ENCODE measurements at regions of chr17 and their contacts with region 1.

Region 1: GRCh38 chr17:75749545-75750389 is 15.2 kb downstream of the GALK1 start:
- DNase-seq: peak; percentile 89 to 91
- ATAC-seq: peak; percentile 72 to 85 (median 72)
- H3K4me3 ChIP-seq: no peak overlapping the region
- H3K4me3 Mint-ChIP-seq: peak overlapping the region; percentile 45
- H3K27ac ChIP-seq: no peak overlapping the region
- H3K27ac Mint-ChIP-seq: no peak overlapping the region
- H3K4me1 ChIP-seq: peaks cover 31% of the 10 kb centered on the region
- H3K4me1 Mint-ChIP-seq: peaks cover 13 to 16% of the 10 kb centered on the region in 2 donors
- H3K27me3 ChIP-seq: no peaks in the 10 kb centered on the region
- H3K27me3 Mint-ChIP-seq: peaks cover 3 to 7% of the 10 kb centered on the region in 2 donors
- CTCF ChIP-seq: peak; percentile 89

Region 2: DNA sequence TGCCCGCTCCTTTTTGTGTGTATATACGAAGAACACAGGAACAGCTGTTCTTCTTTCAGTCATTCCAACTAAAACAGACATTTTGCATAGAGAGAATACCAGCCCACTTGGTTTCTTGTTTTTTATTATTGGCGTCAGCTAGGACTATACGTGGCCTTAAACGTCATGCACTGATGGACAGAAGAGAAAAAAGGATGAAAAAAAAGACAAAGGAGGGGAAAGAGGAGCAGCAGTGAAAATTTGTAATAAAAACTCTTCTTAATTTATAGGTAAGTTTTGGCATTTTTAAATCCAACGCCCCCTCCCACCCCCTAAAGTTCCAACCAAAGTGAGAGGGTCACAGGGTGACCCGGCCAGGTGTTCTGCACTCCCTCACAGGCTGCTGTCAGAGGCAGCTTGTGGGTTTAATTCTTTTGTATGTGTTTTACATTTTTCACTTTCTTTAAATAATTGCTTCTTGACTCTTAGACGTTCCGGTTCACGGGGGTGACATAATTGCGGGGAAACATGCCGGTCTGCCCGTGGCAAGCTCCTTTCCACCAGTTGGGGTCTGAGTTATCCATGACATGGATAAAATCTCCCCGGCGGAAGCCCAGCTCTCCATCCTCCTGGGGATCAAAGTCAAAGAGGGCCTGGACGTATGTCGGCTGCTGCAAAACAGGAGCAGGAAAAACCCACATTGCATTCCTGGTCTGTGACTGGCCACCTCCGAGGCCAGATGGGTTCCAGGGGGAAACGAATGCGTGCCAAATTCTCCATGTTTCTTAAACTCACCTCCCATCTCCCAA is 429.7 kb before region 1 on chr17:
- intact Hi-C with region 1: no loop called
- DNase-seq: no peak
- ATAC-seq: no peak
- H3K4me3 ChIP-seq: no peak overlapping the region
- H3K4me3 Mint-ChIP-seq: no peak overlapping the region
- H3K27ac ChIP-seq: peak overlapping the region; percentile 51
- H3K27ac Mint-ChIP-seq: no peak overlapping the region
- H3K4me1 ChIP-seq: peaks cover 36% of the 10 kb centered on the region
- H3K4me1 Mint-ChIP-seq: peaks cover 7 to 12% of the 10 kb centered on the region in 2 donors
- H3K27me3 ChIP-seq: no peaks in the 10 kb centered on the region
- H3K27me3 Mint-ChIP-seq: no peaks in the 10 kb centered on the region
- CTCF ChIP-seq: no peak

Region 3: DNA sequence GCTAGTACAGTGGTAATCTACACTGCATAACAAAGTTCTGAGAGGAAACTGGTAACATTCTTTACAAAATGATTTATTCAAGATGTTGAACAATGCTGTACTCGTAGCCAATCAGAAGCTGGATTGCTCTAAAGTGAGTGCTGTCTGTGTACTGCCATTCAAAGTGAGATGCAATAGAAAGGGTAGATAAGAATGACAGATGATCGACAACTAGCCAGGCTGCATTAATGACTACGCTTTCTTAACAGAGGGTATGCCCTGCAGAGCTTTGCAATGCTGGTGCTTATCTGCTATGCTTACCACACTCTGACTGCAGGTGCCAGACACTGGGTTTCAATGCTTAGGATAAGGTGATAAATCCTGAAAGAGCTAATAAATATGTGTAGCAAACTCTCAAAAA is 414.5 kb before region 1 on chr17:
- intact Hi-C with region 1: no loop called
- DNase-seq: no peak
- ATAC-seq: peak in 1 of 3 donors; percentile 32
- H3K4me3 ChIP-seq: no peak overlapping the region
- H3K4me3 Mint-ChIP-seq: no peak overlapping the region
- H3K27ac ChIP-seq: no peak overlapping the region
- H3K27ac Mint-ChIP-seq: peak overlapping the region; percentile 20 to 24
- H3K4me1 ChIP-seq: peaks cover 45% of the 10 kb centered on the region
- H3K4me1 Mint-ChIP-seq: peaks cover 41 to 52% of the 10 kb centered on the region in 2 donors
- H3K27me3 ChIP-seq: no peaks in the 10 kb centered on the region
- H3K27me3 Mint-ChIP-seq: no peaks in the 10 kb centered on the region
- CTCF ChIP-seq: no peak

Region 4: DNA sequence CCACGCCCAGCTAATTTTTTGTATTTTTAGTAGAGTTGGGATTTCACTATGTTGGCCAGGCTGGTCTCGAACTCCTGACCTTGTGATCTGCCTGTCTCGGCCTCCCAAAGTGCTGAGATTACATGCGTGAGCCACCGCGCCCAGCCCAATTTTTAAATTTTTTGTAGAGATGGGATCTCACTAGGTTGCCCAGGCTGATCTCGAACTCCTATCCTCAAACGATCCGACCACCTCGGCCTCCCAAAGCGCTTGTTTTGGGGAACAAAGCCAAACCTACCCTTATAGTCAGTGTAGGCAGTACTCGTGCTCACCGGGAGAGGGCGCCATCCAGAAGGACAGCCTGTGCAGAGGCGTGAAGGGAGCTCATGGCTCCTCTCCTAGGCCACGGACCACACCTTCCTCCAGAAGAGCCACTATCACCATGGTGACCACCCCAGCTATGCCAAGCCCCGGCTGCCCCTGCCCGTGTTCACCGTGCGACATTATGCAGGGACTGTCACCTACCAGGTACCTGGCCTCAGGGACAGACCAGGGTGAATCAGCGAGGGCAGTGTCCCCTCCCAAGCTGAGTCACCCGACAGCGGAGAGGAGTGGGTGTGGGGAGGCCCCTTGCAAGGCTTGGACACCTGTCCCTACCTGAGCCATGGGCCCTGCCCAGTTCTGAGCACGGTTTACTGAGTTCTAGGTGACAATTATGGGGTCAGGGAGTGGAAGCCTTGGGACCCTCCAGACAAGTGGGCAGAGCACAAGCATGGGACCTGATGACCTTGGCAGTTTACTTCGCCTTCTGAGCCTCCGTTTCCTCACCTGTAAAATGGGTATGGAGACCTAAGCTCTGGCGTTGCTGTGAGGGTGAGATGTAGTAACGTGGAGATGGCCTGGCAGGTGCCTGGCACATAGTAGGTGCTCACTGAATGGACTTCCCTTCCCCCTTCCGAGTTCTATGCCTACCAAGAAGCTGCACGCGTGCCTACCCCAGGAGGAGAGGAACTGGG is 148.4 kb before region 1 on chr17:
- intact Hi-C with region 1: loop called (anchors 1 kb)
- DNase-seq: peak; percentile 55 to 72
- ATAC-seq: peak; percentile 84 to 90 (median 89)
- H3K4me3 ChIP-seq: no peak overlapping the region
- H3K4me3 Mint-ChIP-seq: no peak overlapping the region
- H3K27ac ChIP-seq: no peak overlapping the region
- H3K27ac Mint-ChIP-seq: no peak overlapping the region
- H3K4me1 ChIP-seq: no peaks in the 10 kb centered on the region
- H3K4me1 Mint-ChIP-seq: peaks cover 0 to 5% of the 10 kb centered on the region in 2 donors
- H3K27me3 ChIP-seq: no peaks in the 10 kb centered on the region
- H3K27me3 Mint-ChIP-seq: no peaks in the 10 kb centered on the region
- CTCF ChIP-seq: peak; percentile 71

Region 5: DNA sequence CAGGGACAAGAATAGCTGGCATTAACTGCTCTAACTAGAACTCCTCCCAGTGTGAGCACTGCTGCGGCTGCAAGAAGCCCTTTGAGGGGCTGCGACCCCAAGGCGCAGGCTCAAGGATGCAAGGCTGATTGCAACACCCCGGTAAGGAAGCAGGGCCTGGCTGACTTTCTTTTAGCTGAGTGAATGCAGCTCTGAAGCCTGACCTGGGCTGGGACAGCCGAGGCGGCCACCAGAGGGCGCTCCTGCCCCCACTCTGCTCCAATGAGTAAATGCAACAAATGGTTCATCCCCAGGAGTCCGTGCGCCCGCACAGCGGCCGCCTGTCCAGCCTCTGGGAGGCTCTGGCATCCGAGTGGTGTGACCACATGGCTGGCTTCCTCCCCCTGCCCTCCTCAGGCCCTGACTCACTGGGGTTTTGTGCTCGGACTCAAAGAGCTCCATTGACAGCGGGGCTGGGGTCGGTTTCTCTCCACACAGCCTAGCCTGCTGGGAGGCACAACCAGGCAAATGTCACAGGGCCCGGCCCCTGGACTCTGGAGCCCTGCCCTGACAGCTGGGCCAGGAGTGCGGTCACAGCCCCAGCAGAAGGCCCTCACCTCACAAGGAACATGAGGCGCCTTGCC is 116.8 kb before region 1 on chr17 and contains the start of gene SMIM5:
- intact Hi-C with region 1: loop called (anchors 1 kb)
- DNase-seq: peak; percentile 81 to 88
- ATAC-seq: peak; percentile 88 to 97 (median 90)
- H3K4me3 ChIP-seq: no peak within 1 kb of the TSS
- H3K4me3 Mint-ChIP-seq: no peak within 1 kb of the TSS
- H3K27ac ChIP-seq: no peak within 1 kb of the TSS
- H3K27ac Mint-ChIP-seq: peak within 1 kb of the TSS in 1 of 2 donors; percentile 31
- H3K4me1 ChIP-seq: peaks cover 17% of the 10 kb centered on the region
- H3K4me1 Mint-ChIP-seq: peaks cover 0 to 5% of the 10 kb centered on the region in 2 donors
- H3K27me3 ChIP-seq: no peaks in the 10 kb centered on the region
- H3K27me3 Mint-ChIP-seq: no peaks in the 10 kb centered on the region
- CTCF ChIP-seq: peak; percentile 82
- total RNA-seq, gene SMIM5: 0.95 to 2.0 (median 1.5) TPM

Region 6: DNA sequence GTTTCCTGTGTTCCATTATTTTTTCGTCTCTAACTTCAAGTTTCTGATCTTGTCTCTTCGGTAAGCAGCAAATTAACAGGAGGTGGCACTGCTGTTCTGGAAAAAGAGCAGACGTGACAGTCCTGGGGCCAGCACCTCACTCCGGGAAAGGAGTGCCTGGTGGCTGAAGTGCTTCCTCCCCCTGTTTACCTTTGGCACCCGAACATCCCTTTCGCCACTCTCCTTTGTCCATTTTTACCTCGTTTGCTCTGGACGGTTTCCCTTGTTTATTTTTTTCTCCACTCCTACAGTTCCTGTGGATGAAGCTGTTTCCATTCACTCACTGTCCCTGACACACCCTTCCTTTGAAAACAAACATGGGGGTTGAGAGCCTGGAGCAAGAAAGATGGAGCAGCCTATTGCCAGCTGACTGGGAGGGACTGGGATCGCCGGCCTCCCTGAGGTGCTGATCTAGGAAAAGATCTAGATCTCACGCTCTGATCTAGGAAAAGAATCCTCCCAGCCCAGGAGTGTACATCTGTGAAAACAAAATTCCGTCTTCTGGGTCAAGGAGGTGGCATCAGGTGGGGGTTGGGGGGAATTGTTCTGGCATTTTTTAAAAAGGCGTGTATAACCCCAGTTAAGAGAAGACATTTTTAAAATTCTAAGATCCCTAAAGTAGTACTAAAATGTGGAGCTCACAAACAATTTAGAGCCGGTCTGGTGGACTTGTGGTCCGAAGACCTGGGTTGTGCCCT is 69.9 kb before region 1 on chr17:
- intact Hi-C with region 1: loop called (anchors 2 kb)
- DNase-seq: no peak
- ATAC-seq: no peak
- H3K4me3 ChIP-seq: no peak overlapping the region
- H3K4me3 Mint-ChIP-seq: no peak overlapping the region
- H3K27ac ChIP-seq: no peak overlapping the region
- H3K27ac Mint-ChIP-seq: no peak overlapping the region
- H3K4me1 ChIP-seq: no peaks in the 10 kb centered on the region
- H3K4me1 Mint-ChIP-seq: peaks cover 0 to 16% of the 10 kb centered on the region in 2 donors
- H3K27me3 ChIP-seq: no peaks in the 10 kb centered on the region
- H3K27me3 Mint-ChIP-seq: no peaks in the 10 kb centered on the region
- CTCF ChIP-seq: no peak

Region 7: DNA sequence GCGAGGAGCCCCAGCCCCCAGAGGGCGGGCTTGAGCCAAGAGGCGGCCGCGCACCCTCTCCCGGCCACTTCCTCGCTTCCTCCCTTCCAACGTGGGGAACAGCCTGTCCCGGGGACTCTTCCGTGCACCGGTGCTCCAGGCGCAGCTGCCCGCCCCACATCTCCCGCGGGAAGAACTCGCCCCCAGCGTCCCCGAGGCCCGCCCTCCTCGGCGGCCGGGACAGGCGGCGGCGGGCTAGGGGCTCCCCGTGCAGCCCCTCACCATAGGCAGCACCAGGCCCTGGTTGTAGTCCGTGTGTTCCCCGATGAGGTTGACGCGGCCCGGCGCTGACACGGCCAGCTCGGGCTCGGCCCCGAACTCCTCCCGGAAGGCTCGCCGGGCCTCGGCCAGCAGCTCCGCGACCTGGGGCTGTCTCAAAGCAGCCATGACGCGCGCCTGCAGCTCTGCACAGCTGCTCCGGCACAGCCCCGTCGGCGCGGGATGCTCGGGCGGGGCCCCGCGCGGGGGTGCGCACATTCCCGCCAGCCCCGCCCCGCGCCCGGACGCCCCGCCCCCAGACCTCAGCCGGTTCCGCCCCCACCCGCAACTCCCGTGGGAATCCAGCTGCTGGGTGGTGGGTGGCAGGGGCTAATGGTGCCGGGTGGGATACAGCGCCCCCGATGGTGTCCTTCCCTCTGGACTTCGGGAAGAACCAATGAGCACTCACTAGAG is 15.1 kb after region 1 on chr17 and contains the start of gene GALK1:
- intact Hi-C with region 1: no loop called
- DNase-seq: peak; percentile 56 to 87
- ATAC-seq: peak; percentile 83 to 93 (median 93)
- H3K4me3 ChIP-seq: peak within 1 kb of the TSS; percentile 58
- H3K4me3 Mint-ChIP-seq: peak within 1 kb of the TSS; percentile 82
- H3K27ac ChIP-seq: peak within 1 kb of the TSS; percentile 41
- H3K27ac Mint-ChIP-seq: peak within 1 kb of the TSS in 1 of 2 donors; percentile 66
- H3K4me1 ChIP-seq: peaks cover 22% of the 10 kb centered on the region
- H3K4me1 Mint-ChIP-seq: peaks cover 7 to 30% of the 10 kb centered on the region in 2 donors
- H3K27me3 ChIP-seq: no peaks in the 10 kb centered on the region
- H3K27me3 Mint-ChIP-seq: no peaks in the 10 kb centered on the region
- CTCF ChIP-seq: peak; percentile 75
- total RNA-seq, gene GALK1: 11.9 to 15.9 (median 12.6) TPM

Measured in natural killer cell (primary cell).